AG04449 (cell line): ENCODE measurements at regions of chr6 and their contacts with region 1.

Region 1: DNA sequence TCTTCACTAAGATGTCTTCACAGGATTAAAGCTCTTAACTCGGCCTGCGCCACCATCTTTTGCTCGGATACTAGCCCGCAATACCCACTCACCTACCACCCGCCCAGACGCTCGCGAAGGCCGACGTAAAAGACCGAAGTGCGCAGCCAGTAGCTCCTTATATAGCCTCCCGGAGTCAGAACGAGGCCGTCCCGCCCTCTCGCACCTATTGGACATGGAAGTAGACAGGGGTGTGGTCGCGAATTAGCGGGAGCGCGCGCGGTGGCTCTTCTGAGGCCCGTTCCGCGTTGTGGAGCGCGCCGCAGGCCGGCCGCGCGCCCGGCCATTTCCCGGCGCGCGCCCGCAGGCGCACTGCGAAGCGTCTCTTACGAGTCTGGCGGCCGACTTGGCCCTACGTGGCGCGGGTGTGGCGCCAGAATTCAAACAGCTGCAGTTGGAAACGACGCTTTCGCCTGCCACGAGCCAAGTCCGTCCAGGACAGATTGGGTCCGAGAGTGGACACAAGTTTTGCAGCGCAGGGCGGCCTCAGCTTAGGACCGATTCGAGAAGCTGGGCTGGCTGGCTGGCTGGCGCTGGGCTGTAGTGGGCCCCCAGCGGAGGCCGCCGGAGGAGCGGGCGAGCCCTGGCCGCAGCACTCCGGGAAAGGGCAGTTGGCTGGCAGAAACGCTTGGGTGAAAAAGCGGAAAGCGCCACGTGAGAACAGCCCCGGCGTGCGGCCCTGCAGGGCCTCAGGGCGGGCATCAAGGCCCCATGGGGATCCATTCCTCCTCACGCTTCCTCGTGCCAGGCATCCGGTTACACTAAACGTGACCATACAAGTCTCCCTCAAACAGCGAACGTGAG is 36.1 kb upstream of the SYNCRIP start:
- DNase-seq: peak; percentile 92
- H3K4me3 ChIP-seq: peak overlapping the region; percentile 81
- CTCF ChIP-seq: peak; percentile 0

Region 2: GRCh38 chr6:85449818-85450759 is 228.7 kb before region 1 on chr6 and contains the start of gene NT5E:
- CTCF ChIA-PET with region 1: no interaction called
- POLR2A ChIA-PET with region 1: interaction called, 11 read pairs
- DNase-seq: no peak
- H3K4me3 ChIP-seq: peak within 1 kb of the TSS; percentile 78
- CTCF ChIP-seq: peak; percentile 9

Region 3: GRCh38 chr6:85593438-85594196 is 85.2 kb before region 1 on chr6 and contains the start of gene SNX14:
- CTCF ChIA-PET with region 1: no interaction called
- POLR2A ChIA-PET with region 1: interaction called, 34 read pairs
- DNase-seq: peak; percentile 58
- H3K4me3 ChIP-seq: peak within 1 kb of the TSS; percentile 94
- CTCF ChIP-seq: peak; percentile 5

Region 4: GRCh38 chr6:85642774-85643536 is 35.9 kb before region 1 on chr6 and contains the start of gene SYNCRIP:
- CTCF ChIA-PET with region 1: interaction called, 4 read pairs
- POLR2A ChIA-PET with region 1: interaction called, 337 read pairs
- DNase-seq: peak; percentile 86
- H3K4me3 ChIP-seq: peak within 1 kb of the TSS; percentile 99
- CTCF ChIP-seq: no peak

Region 5: DNA sequence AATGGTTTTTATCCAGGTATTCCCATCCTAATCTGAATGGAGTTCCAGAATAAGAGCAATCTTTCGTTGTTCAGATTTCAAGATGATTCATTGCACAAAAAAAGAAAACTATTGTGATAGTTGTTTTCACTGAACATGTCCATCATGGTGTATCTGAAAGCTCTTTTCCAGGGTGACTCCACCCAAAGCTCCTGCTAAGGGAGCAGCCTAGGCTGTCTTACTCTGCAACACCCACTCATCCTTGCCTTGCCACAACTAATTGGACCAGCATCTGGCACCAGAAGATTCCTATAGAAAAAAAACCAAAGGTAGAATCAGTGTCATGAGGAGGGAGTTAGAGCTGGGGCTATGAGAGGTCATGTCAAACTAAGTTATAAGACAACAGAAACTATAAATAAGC is 28.2 kb before region 1 on chr6:
- CTCF ChIA-PET with region 1: interaction called, 3 read pairs
- POLR2A ChIA-PET with region 1: interaction called, 337 read pairs
- DNase-seq: no peak
- H3K4me3 ChIP-seq: no peak overlapping the region
- CTCF ChIP-seq: no peak

Region 6: DNA sequence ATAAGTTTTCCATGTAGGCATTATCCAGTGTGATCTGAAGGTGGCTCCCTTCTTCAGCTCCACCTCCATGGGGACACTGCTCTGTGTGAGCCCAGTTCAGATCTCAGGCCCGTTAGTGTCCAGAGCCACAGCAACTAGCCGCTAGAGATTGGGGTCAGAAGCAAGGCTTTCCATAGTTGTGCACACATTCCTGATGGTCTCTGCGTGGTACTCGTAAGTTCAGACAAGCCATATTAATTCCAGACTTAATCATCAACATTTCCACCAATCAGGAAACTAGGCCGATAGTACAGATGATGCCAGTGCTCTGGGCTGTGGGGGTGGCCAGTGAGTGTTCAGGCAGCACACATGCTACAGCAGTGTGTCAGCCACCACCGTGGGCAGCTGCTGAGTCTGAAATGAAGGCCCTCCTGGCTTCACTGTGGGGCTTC is 18.6 kb before region 1 on chr6:
- CTCF ChIA-PET with region 1: interaction called, 4 read pairs
- POLR2A ChIA-PET with region 1: interaction called, 35 read pairs
- DNase-seq: peak; percentile 87
- H3K4me3 ChIP-seq: peak overlapping the region; percentile 32; the same call in 1 of the 2 replicates
- CTCF ChIP-seq: peak; percentile 14

Region 7: DNA sequence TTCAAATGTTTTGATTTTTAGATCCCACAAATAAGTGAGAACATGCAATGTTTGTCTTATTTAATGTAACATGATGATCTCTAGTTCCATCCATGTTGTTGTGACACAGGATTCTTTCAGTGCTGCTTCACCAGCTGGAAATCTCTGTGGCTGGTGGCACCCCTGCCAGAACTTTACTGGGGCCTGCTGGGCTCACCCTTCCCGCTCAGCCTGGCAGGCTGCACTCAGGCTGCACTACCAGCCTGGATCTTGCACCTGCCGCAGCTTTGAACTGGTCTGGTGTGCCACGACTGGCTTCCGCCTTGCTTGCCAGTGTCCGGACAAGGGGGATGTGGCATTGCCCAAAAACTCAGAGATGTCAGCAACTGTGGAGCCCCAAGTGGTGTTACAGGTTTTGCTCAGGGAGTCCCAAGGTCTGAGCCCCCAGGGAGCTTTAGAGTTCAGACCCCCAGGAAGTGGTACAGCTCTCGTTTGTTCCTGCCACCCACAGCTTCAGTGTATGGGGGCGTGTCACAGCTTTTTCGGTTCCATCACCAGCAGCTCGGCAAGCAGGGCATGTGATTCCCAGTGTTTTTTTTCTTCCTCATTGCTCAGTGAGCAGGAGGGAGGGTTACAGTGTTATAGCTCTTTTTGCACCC is 36.2 kb after region 1 on chr6:
- CTCF ChIA-PET with region 1: no interaction called
- POLR2A ChIA-PET with region 1: no interaction called
- DNase-seq: no peak
- H3K4me3 ChIP-seq: no peak overlapping the region
- CTCF ChIP-seq: no peak

Region 8: GRCh38 chr6:85747665-85748064 is 68.8 kb after region 1 on chr6:
- CTCF ChIA-PET with region 1: no interaction called
- POLR2A ChIA-PET with region 1: interaction called, 14 read pairs
- DNase-seq: peak; percentile 47
- H3K4me3 ChIP-seq: no peak overlapping the region
- CTCF ChIP-seq: no peak

Region 9: GRCh38 chr6:85867595-85867994 is 188.8 kb after region 1 on chr6:
- CTCF ChIA-PET with region 1: no interaction called
- POLR2A ChIA-PET with region 1: no interaction called
- DNase-seq: no peak
- H3K4me3 ChIP-seq: no peak overlapping the region
- CTCF ChIP-seq: no peak